CD14-positive monocyte (primary cell): ENCODE measurements at regions of chr13 and their contacts with region 1.

Region 1: DNA sequence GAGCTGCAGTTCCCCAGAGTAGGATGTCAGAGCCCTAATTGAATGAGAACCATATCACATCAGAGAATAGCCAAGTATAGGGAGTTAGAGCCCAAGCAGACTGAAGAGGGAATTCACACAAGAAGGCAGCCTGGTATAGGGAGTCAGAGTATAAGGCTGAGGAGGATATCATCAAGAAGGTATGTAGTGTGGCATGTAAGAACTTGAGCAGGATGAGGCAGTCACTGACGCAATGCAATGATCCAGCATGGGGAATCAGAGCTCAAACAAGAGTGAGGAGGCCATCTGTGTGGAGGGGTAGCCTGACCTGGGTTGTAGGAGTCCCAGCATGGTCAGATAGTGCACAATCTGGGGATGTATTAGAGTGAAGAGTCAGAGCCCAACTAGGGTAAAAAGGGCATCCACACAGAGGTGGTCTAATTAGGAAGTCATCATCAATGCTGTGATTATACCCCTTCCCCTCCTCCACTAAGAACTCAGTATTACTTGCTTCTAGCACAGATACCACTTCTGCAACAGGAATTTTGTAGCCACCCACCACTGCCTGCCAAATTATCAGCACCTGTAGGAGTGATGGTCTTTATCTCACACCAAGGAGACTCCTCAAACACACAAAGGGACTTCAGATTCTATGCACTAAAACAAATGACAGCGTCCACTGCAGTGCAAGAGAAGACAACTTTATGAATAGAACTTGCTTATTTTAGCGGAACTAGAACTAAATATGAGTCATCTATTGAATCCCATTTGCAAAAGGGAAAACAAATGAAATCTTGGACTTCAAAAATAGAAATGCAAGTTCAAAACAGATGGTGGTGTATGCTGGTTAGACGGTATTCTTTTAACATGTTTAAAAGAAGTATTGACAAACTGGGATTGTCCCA is 107.2 kb downstream of the FNDC3A start:
- DNase-seq: no peak
- H3K4me3 ChIP-seq: no peak overlapping the region
- H3K4me3 Mint-ChIP-seq: no peak overlapping the region
- H3K27ac ChIP-seq: no peak overlapping the region
- H3K27ac Mint-ChIP-seq: peak overlapping the region in 3 of 7 donors; percentile 8 to 82 (median 42)
- H3K4me1 ChIP-seq: no peaks in the 10 kb centered on the region
- H3K4me1 Mint-ChIP-seq: peaks cover 3% of the 10 kb centered on the region
- H3K27me3 ChIP-seq: no peaks in the 10 kb centered on the region
- H3K27me3 Mint-ChIP-seq: no peaks in the 10 kb centered on the region
- CTCF ChIP-seq: no peak

Region 2: GRCh38 chr13:48879854-48880253 is 203.0 kb before region 1 on chr13:
- intact Hi-C with region 1: loop called in 1 of 2 experiments (anchors 5 kb)
- DNase-seq: no peak
- H3K4me3 ChIP-seq: no peak overlapping the region
- H3K4me3 Mint-ChIP-seq: no peak overlapping the region
- H3K27ac ChIP-seq: no peak overlapping the region
- H3K27ac Mint-ChIP-seq: peak overlapping the region in 2 of 7 donors; percentile 15 to 23
- H3K4me1 ChIP-seq: peaks cover 16 to 18% of the 10 kb centered on the region in 2 donors
- H3K4me1 Mint-ChIP-seq: peaks cover 32% of the 10 kb centered on the region
- H3K27me3 ChIP-seq: no peaks in the 10 kb centered on the region
- H3K27me3 Mint-ChIP-seq: peaks cover 0 to 3% (median 2%) of the 10 kb centered on the region in 3 donors
- CTCF ChIP-seq: no peak

Region 3: GRCh38 chr13:48975856-48976575 is 106.9 kb before region 1 on chr13 and contains the start of gene FNDC3A:
- intact Hi-C with region 1: loop called in 1 of 2 experiments (anchors 10 kb)
- DNase-seq: peak; percentile 80 to 88 (median 82)
- H3K4me3 ChIP-seq: peak within 1 kb of the TSS; percentile 80 to 97 (median 92)
- H3K4me3 Mint-ChIP-seq: peak within 1 kb of the TSS; percentile 95 to 96
- H3K27ac ChIP-seq: peak within 1 kb of the TSS; percentile 96 to 99
- H3K27ac Mint-ChIP-seq: peak within 1 kb of the TSS; percentile 96 to 99 (median 99)
- H3K4me1 ChIP-seq: peaks cover 40 to 51% of the 10 kb centered on the region in 2 donors
- H3K4me1 Mint-ChIP-seq: peaks cover 34% of the 10 kb centered on the region
- H3K27me3 ChIP-seq: no peaks in the 10 kb centered on the region
- H3K27me3 Mint-ChIP-seq: no peaks in the 10 kb centered on the region
- CTCF ChIP-seq: no peak
- polyA plus RNA-seq, gene FNDC3A: 8.3 to 27.0 (median 12.0) TPM

Region 4: DNA sequence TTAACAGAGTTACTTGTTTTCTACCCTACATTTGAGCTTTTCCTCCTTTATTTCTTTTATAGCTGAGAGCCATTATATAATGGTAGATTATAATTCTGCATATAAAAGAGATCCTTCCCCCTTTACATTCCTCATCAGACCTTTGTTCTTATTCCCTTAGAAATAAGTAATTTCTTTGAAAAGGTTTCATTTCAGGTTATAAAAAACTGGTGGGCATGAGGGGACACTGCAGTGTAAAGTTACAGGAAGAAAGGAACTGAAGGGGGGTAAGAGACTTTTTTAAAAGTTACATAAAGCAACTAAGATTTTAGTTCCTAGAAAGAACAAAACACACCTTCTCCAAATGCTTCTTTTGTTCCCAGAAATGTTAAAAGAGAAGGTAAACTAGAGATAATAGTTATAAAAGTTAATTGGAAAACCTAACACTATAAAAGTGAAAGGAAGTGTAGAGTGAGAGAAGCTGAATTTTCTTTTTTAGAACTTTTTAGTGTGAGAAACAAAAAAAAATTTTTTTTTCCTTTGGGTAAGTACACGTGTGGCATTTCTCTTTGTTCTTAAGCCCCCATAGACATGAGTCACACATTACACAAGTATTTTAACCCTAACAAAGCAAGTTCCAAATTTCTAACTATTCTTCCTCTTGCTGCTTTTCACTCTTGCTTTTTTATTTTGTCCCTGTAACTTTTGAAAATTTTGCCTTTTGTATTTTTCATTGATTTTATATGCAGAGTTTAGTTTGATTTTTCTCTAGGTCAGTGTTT is 30.8 kb after region 1 on chr13:
- intact Hi-C with region 1: no loop called
- DNase-seq: peak in 2 of 3 donors; percentile 26 to 48
- H3K4me3 ChIP-seq: no peak overlapping the region
- H3K4me3 Mint-ChIP-seq: peak overlapping the region in 1 of 2 donors; percentile 9
- H3K27ac ChIP-seq: peak overlapping the region in 1 of 2 donors; percentile 34
- H3K27ac Mint-ChIP-seq: peak overlapping the region; percentile 51 to 77 (median 71)
- H3K4me1 ChIP-seq: peaks cover 31 to 34% of the 10 kb centered on the region in 2 donors
- H3K4me1 Mint-ChIP-seq: peaks cover 26% of the 10 kb centered on the region
- H3K27me3 ChIP-seq: no peaks in the 10 kb centered on the region
- H3K27me3 Mint-ChIP-seq: no peaks in the 10 kb centered on the region
- CTCF ChIP-seq: no peak